T-cell (primary cell): ENCODE measurements at regions of chr14 and their contacts with region 1.

Region 1: GRCh38 chr14:99378782-99379214 is 101.9 kb downstream of the SETD3 start:
- DNase-seq: no peak
- ATAC-seq: no peak
- H3K4me3 ChIP-seq: no peak overlapping the region
- H3K4me3 Mint-ChIP-seq: no peak overlapping the region
- H3K27ac ChIP-seq: no peak overlapping the region
- H3K27ac Mint-ChIP-seq: no peak overlapping the region
- H3K4me1 ChIP-seq: peaks cover 0 to 8% of the 10 kb centered on the region in 2 experiments
- H3K4me1 Mint-ChIP-seq: peaks cover 0 to 7% (median 0%) of the 10 kb centered on the region in 3 donors
- H3K27me3 ChIP-seq: peaks cover 0 to 56% of the 10 kb centered on the region in 2 experiments
- H3K27me3 Mint-ChIP-seq: peaks cover 22 to 45% of the 10 kb centered on the region in 2 donors

Region 2: GRCh38 chr14:98321838-98322237 is 1057.0 kb before region 1 on chr14:
- CTCF ChIA-PET with region 1: no interaction called
- POLR2A ChIA-PET with region 1: interaction called in 1 of 2 experiments, 11 read pairs
- DNase-seq: no peak
- ATAC-seq: no peak
- H3K4me3 ChIP-seq: no peak overlapping the region
- H3K4me3 Mint-ChIP-seq: no peak overlapping the region
- H3K27ac ChIP-seq: no peak overlapping the region
- H3K27ac Mint-ChIP-seq: peak overlapping the region in 1 of 2 donors; percentile 24
- H3K4me1 ChIP-seq: peaks cover 0 to 2% of the 10 kb centered on the region in 2 experiments
- H3K4me1 Mint-ChIP-seq: peaks cover 16 to 29% (median 22%) of the 10 kb centered on the region in 3 donors
- H3K27me3 ChIP-seq: no peaks in the 10 kb centered on the region
- H3K27me3 Mint-ChIP-seq: no peaks in the 10 kb centered on the region

Region 3: DNA sequence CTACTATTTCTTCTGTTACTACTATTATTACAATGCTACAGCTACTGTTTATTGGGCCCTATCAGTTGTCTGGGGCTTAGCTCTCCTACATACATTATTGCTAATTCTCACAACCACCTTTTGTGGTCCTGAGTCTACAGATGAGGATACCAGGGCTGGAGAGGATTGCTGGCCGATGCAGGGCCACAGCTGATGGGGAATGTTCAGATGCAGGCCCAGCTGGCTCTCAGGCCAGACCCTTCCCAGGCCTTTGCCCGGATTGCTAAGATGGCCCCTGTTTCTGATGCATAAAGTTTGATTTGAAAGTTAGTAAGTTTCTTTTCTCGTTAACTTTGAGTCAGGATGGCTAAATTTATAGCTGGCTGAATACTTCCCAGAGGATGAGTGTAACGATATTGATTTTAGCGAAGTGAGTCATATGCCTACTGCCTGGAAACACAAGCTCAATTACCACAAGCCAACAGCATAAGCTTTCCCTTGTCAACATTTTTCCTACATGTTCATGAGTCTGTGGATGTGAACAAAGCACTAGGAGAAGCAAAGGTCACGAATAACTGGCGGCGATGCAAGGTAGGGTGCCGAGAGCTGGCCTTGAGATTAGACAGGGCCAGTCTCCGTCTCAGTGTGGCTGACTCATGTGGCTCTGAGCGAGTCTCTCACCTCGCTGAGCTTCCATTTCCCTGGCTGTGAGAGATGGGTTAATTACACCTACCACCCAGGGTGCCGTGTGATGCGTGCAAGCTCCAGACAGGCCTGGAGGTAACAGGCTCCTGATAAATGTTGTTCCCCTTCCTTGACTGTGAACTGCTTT is 1097.4 kb after region 1 on chr14:
- CTCF ChIA-PET with region 1: no interaction called
- POLR2A ChIA-PET with region 1: no interaction called
- DNase-seq: no peak
- ATAC-seq: no peak
- H3K4me3 ChIP-seq: no peak overlapping the region
- H3K4me3 Mint-ChIP-seq: no peak overlapping the region
- H3K27ac ChIP-seq: no peak overlapping the region
- H3K27ac Mint-ChIP-seq: no peak overlapping the region
- H3K4me1 ChIP-seq: no peaks in the 10 kb centered on the region
- H3K4me1 Mint-ChIP-seq: no peaks in the 10 kb centered on the region
- H3K27me3 ChIP-seq: no peaks in the 10 kb centered on the region
- H3K27me3 Mint-ChIP-seq: no peaks in the 10 kb centered on the region